ENCODE measurements at regions of chr5 and their contacts with region 1.

Region 1: GRCh38 chr5:179763215-179763945 is 30.4 kb upstream of the LTC4S start:
- DNase-seq: peak in 8 of 9 donors; percentile 32 to 64 (median 51)
- ATAC-seq: peak; percentile 75
- H3K4me3 ChIP-seq: no peak overlapping the region
- H3K4me3 Mint-ChIP-seq: peak overlapping the region in 2 of 10 donors; percentile 12 to 29
- H3K27ac ChIP-seq: no peak overlapping the region
- H3K27ac Mint-ChIP-seq: peak overlapping the region in 6 of 9 donors; percentile 10 to 90 (median 49)
- H3K4me1 ChIP-seq: peaks cover 7 to 13% of the 10 kb centered on the region in 2 donors
- H3K4me1 Mint-ChIP-seq: peaks cover 48 to 70% (median 57%) of the 10 kb centered on the region in 7 donors
- H3K27me3 ChIP-seq: no peaks in the 10 kb centered on the region
- H3K27me3 Mint-ChIP-seq: no peaks in the 10 kb centered on the region

Region 2: DNA sequence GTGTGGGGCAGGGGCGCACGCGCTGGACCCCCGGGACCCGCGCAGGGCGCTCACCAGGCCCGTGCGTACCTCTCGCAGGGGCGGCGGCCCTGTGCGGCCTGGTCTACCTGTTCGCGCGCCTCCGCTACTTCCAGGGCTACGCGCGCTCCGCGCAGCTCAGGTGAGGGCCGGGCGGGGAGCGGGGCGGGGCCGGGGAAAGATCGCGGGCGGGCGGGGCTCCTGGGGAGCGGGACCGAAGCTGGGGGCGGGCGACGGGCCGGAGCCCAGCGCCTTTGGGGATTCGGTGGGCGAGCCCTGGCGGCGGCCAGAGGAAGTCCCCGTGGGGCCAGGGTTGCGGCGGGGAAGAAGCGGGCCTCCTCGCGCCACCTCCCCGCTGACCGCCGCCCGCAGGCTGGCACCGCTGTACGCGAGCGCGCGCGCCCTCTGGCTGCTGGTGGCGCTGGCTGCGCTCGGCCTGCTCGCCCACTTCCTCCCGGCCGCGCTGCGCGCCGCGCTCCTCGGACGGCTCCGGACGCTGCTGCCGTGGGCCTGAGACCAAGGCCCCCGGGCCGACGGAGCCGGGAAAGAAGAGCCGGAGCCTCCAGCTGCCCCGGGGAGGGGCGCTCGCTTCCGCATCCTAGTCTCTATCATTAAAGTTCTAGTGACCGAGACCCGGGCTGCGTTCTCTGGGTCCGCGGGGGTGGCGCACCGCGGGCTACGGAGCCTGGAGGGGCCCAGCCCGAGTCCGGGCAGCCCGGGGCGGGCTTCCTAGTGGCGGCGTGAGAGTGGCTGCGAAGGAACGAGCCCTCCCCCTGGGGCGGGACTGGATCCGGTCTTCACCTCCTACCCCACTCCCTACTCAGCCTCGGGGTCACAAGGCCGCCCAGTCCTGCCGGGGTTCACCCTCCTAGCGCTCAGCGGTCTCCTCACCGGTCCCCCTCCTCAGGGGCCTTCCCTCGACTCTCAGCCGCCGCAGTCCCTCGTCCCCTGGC is 32.8 kb after region 1 on chr5:
- CTCF ChIA-PET with region 1: interaction called, 36 read pairs
- POLR2A ChIA-PET with region 1: interaction called, 6 read pairs
- intact Hi-C with region 1: loop called (anchors 1 kb)
- DNase-seq: peak; percentile 37 to 81 (median 65)
- ATAC-seq: peak; percentile 84
- H3K4me3 ChIP-seq: peak overlapping the region; percentile 48
- H3K4me3 Mint-ChIP-seq: peak overlapping the region; percentile 40 to 78 (median 64)
- H3K27ac ChIP-seq: peak overlapping the region; percentile 68
- H3K27ac Mint-ChIP-seq: peak overlapping the region in 4 of 9 donors; percentile 17 to 80 (median 33)
- H3K4me1 ChIP-seq: peaks cover 24 to 28% of the 10 kb centered on the region in 2 donors
- H3K4me1 Mint-ChIP-seq: peaks cover 20 to 33% (median 30%) of the 10 kb centered on the region in 7 donors
- H3K27me3 ChIP-seq: no peaks in the 10 kb centered on the region
- H3K27me3 Mint-ChIP-seq: no peaks in the 10 kb centered on the region

Measured in naive thymus-derived CD4-positive, alpha-beta T cell (primary cell).